Left ventricle myocardium superior (tissue), 1 donor: ENCODE measurements at regions of chr12 and their contacts with region 1.

Region 1: GRCh38 chr12:94133964-94134795 is 14.2 kb upstream of the PLXNC1 start:
- DNase-seq: no peak
- ATAC-seq: peak; percentile 70

Region 2: GRCh38 chr12:93325855-93326254 is 808.3 kb before region 1 on chr12:
- intact Hi-C with region 1: no loop called
- DNase-seq: no peak
- ATAC-seq: no peak

Region 3: GRCh38 chr12:93839064-93839463 is 295.1 kb before region 1 on chr12:
- intact Hi-C with region 1: no loop called
- DNase-seq: no peak
- ATAC-seq: no peak

Region 4: GRCh38 chr12:94336211-94336925 is 202.2 kb after region 1 on chr12:
- intact Hi-C with region 1: no loop called
- DNase-seq: no peak
- ATAC-seq: peak; percentile 64

Region 5: DNA sequence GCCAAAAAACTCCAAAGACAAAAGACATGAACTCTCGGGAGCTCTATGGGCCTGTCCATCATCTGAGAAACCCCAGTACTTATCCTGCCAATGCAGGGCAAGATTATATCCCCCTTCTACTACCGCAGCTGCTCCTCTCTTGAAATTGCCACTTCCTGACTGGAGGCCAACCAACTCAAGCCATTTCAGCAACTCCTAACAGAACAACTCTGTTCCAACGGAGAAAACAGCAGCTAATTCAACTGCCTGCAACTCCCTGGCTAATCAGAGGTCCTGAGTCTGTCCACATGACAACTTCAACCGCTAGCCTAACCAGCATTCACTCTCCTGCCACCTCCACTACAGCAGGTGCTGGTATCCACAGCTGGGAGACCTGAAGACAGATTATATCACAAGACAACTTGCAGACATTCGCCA is 301.3 kb after region 1 on chr12:
- intact Hi-C with region 1: loop called (anchors 10 kb)
- DNase-seq: no peak
- ATAC-seq: peak; percentile 67